ENCODE measurements at regions of chr7 and their contacts with region 1.

Region 1: DNA sequence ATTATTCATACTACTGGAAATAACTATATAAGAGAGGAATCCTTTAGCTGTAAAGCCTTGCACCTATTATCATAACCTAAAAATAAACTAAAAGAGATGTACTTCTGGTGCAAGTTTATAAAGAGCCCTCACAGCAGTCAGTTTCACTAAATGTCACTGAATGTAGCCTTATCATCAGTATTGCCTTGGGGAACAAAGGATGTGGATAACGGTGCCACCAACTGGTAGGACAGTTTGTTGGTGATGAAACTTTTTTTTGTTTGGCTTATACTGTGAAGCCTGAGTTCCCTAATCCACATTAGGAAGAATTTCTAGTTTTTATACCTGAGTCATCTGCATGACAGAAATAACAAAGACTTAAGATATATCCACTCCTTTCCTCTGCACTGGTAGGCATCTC is 117.9 kb upstream of the COL1A2 start:
- DNase-seq: no peak
- H3K4me3 Mint-ChIP-seq: no peak overlapping the region
- H3K27ac Mint-ChIP-seq: no peak overlapping the region
- H3K4me1 Mint-ChIP-seq: peaks cover 7% of the 10 kb centered on the region
- H3K27me3 Mint-ChIP-seq: peaks cover 22% of the 10 kb centered on the region

Region 2: GRCh38 chr7:93799750-93800357 is 476.9 kb before region 1 on chr7:
- intact Hi-C with region 1: loop called (anchors 5 kb)
- DNase-seq: no peak
- H3K4me3 Mint-ChIP-seq: no peak overlapping the region
- H3K27ac Mint-ChIP-seq: no peak overlapping the region
- H3K4me1 Mint-ChIP-seq: no peaks in the 10 kb centered on the region
- H3K27me3 Mint-ChIP-seq: no peaks in the 10 kb centered on the region

Region 3: DNA sequence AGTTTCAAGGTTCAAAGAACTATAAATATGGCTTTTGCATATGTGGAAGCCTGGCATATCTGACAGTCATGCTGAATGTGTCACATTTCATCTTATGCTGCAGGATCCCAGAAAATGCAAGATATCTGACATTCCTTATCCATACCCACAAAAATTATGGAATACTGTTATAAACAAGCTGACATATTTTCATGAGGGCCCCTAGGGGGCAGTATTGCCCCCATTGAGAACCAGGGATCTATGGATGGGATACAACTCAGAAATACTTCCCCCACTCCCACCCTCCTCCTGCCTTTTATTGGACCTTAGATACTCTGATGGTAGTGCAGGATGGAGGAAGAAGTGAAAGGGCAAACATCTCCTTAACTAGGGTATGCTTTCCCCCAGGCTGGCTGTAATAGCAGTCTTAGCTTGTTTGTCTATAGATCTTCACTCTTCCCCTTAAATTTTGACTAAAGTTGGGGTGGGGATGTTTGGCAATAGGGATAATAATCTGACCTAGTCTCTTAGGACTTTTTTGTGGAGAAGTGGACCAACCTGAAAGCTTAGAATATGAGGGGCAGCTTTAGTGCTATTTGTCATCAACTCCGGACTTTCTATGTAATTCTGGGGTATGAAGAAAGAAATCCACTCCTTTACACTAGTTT is 373.9 kb before region 1 on chr7:
- intact Hi-C with region 1: loop called (anchors 10 kb)
- DNase-seq: no peak
- H3K4me3 Mint-ChIP-seq: no peak overlapping the region
- H3K27ac Mint-ChIP-seq: no peak overlapping the region
- H3K4me1 Mint-ChIP-seq: no peaks in the 10 kb centered on the region
- H3K27me3 Mint-ChIP-seq: peaks cover 17% of the 10 kb centered on the region

Region 4: GRCh38 chr7:94239661-94240234 is 37.0 kb before region 1 on chr7:
- intact Hi-C with region 1: no loop called
- DNase-seq: no peak
- H3K4me3 Mint-ChIP-seq: no peak overlapping the region
- H3K27ac Mint-ChIP-seq: no peak overlapping the region
- H3K4me1 Mint-ChIP-seq: no peaks in the 10 kb centered on the region
- H3K27me3 Mint-ChIP-seq: peaks cover 2% of the 10 kb centered on the region

Region 5: GRCh38 chr7:94313926-94314325 is 37.1 kb after region 1 on chr7:
- intact Hi-C with region 1: no loop called
- DNase-seq: no peak
- H3K4me3 Mint-ChIP-seq: no peak overlapping the region
- H3K27ac Mint-ChIP-seq: no peak overlapping the region
- H3K4me1 Mint-ChIP-seq: no peaks in the 10 kb centered on the region
- H3K27me3 Mint-ChIP-seq: no peaks in the 10 kb centered on the region

Region 6: GRCh38 chr7:94605031-94605430 is 328.2 kb after region 1 on chr7:
- intact Hi-C with region 1: no loop called
- DNase-seq: no peak
- H3K4me3 Mint-ChIP-seq: no peak overlapping the region
- H3K27ac Mint-ChIP-seq: no peak overlapping the region
- H3K4me1 Mint-ChIP-seq: no peaks in the 10 kb centered on the region
- H3K27me3 Mint-ChIP-seq: peaks cover 2% of the 10 kb centered on the region